Caco-2 (cell line): ENCODE measurements at regions of chr6 and their contacts with region 1.

Region 1: GRCh38 chr6:138987640-138988468 is at the start of gene REPS1:
- DNase-seq: peak; percentile 91 to 95
- H3K4me3 ChIP-seq: peak within 1 kb of the TSS; percentile 94
- H3K4me3 Mint-ChIP-seq: peak within 1 kb of the TSS; percentile 90
- H3K27ac Mint-ChIP-seq: peak within 1 kb of the TSS; percentile 91
- H3K4me1 ChIP-seq: peaks cover 30% of the 10 kb centered on the region
- H3K4me1 Mint-ChIP-seq: peaks cover 12% of the 10 kb centered on the region
- H3K27me3 ChIP-seq: no peaks in the 10 kb centered on the region
- H3K27me3 Mint-ChIP-seq: no peaks in the 10 kb centered on the region
- CTCF ChIP-seq: peak; percentile 89 to 93
- total RNA-seq, gene REPS1: 74.1 and 79.9 TPM in 2 replicates

Region 2: DNA sequence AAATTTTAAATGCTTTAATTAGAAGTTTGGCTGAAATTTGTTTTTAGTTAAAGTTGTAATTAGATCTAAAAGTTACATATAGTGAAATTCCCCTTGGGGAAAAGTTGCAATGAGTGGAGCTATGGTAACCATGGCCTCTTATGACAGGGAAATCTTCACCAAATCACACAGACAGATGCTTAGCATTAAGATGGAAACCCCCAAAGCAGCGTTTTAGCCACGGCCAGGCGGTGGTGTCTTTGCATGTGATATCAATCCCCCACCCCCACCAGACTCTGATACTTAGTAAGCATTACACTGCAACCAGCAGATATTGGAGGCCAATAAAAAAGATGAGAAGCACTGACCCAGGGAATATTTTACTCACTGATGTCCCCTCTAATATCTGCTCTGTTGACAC is 75.5 kb before region 1 on chr6:
- CTCF ChIA-PET with region 1: no interaction called
- POLR2A ChIA-PET with region 1: no interaction called
- intact Hi-C with region 1: loop called (anchors 2 kb)
- DNase-seq: no peak
- H3K4me3 ChIP-seq: no peak overlapping the region
- H3K4me3 Mint-ChIP-seq: no peak overlapping the region
- H3K27ac Mint-ChIP-seq: no peak overlapping the region
- H3K4me1 ChIP-seq: peaks cover 4% of the 10 kb centered on the region; the same call in 1 of the 2 replicates
- H3K4me1 Mint-ChIP-seq: no peaks in the 10 kb centered on the region
- H3K27me3 ChIP-seq: no peaks in the 10 kb centered on the region
- H3K27me3 Mint-ChIP-seq: no peaks in the 10 kb centered on the region
- CTCF ChIP-seq: no peak

Region 3: DNA sequence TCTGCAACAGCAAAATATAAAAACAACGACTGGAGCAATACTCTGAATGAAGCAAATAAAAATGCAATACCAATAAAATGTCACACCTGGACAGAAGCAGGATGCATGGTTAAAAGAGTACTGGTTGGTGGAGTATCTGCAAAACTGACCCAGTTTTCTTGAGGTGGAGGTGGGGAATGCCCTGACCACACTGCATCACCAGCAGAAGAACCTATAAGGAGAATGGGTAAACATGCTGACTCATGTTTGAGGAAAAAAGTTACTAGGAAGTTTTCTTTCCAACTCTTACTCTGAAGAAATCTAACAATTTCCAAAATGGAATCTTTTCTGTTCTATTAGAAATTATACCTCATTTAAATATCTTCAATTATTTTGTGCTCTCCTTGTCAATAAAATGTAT is 43.4 kb before region 1 on chr6:
- CTCF ChIA-PET with region 1: interaction called, 3 read pairs
- POLR2A ChIA-PET with region 1: no interaction called
- intact Hi-C with region 1: loop called (anchors 2 kb)
- DNase-seq: no peak
- H3K4me3 ChIP-seq: no peak overlapping the region
- H3K4me3 Mint-ChIP-seq: no peak overlapping the region
- H3K27ac Mint-ChIP-seq: no peak overlapping the region
- H3K4me1 ChIP-seq: peaks cover 14% of the 10 kb centered on the region
- H3K4me1 Mint-ChIP-seq: peaks cover 22% of the 10 kb centered on the region
- H3K27me3 ChIP-seq: no peaks in the 10 kb centered on the region
- H3K27me3 Mint-ChIP-seq: no peaks in the 10 kb centered on the region
- CTCF ChIP-seq: no peak

Region 4: DNA sequence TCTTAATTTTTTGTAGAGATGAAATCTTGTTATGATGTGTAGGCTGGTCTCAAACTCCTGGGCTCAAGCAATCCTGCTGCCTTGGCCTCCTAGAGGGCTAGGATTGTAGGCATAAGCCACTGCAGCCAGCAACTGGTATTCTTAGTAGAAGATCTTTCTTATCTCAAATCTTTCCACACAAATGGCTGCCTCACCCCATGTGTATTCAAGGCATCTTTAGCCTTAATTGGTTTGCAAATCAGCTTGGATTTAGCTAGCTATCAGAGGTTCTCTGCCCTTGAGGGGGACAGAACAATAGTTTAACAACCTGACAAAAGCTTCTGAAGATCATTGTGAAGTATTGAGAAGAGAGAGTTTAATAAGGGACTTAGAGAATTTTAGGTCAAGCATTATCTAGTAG is 22.8 kb after region 1 on chr6:
- CTCF ChIA-PET with region 1: interaction called, 4 read pairs
- POLR2A ChIA-PET with region 1: interaction called, 4 read pairs
- intact Hi-C with region 1: loop called (anchors 2 kb)
- DNase-seq: no peak
- H3K4me3 ChIP-seq: no peak overlapping the region
- H3K4me3 Mint-ChIP-seq: no peak overlapping the region
- H3K27ac Mint-ChIP-seq: no peak overlapping the region
- H3K4me1 ChIP-seq: 0 out of 2 replicates have a peak, but pooled peaks cover 10% of the 10 kb centered on the region
- H3K4me1 Mint-ChIP-seq: peaks cover 21% of the 10 kb centered on the region
- H3K27me3 ChIP-seq: no peaks in the 10 kb centered on the region
- H3K27me3 Mint-ChIP-seq: no peaks in the 10 kb centered on the region
- CTCF ChIP-seq: no peak

Region 5: DNA sequence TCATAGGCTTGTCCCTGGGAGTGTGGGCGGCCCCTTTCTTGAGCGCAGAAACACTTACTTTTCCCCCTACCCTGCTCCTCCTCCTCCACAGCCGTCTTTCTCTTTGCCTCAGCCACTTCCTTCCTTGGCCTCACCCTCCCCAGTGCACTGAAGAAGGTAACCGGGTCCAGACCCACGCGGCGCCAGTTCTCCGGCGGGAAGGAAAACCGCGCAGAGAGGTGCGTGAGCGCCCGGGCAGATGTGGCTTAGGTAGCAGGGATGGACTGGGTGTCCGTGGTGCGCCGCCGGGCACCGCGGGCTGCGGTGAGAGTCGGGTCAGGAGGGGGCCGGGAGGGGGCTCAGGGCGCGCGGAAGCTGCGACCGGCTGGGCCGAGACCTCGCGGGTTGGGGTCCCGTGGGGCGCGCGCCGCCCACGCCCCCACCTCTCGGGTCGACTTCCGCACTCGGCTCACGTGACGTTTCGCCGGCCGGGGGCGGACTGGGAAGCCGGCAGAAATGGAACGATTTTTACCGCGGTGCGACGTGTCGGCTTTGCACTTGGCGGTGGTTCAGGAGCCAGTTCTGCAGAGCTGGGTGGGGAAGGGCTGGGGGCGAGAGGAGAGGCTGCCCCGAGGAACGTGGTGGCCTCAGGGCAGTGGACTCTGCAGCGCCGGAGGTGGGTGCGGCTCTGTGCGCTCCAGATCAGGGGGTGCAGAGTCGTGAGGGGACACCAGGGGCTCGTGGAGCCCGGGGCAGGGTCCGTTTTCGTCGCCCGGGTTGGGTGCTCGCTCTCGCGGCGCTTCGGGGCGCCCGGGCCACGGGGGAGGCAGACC is 41.0 kb after region 1 on chr6 and contains the start of gene ABRACL:
- CTCF ChIA-PET with region 1: interaction called, 5 read pairs
- POLR2A ChIA-PET with region 1: interaction called, 4 read pairs
- intact Hi-C with region 1: loop called (anchors 1 kb)
- DNase-seq: peak; percentile 82 to 83
- H3K4me3 ChIP-seq: peak within 1 kb of the TSS; percentile 78
- H3K4me3 Mint-ChIP-seq: no peak within 1 kb of the TSS
- H3K27ac Mint-ChIP-seq: peak within 1 kb of the TSS; percentile 84
- H3K4me1 ChIP-seq: peaks cover 2% of the 10 kb centered on the region
- H3K4me1 Mint-ChIP-seq: peaks cover 8% of the 10 kb centered on the region
- H3K27me3 ChIP-seq: no peaks in the 10 kb centered on the region
- H3K27me3 Mint-ChIP-seq: no peaks in the 10 kb centered on the region
- CTCF ChIP-seq: no peak
- total RNA-seq, gene ABRACL: 90.3 and 90.8 TPM in 2 replicates

Region 6: DNA sequence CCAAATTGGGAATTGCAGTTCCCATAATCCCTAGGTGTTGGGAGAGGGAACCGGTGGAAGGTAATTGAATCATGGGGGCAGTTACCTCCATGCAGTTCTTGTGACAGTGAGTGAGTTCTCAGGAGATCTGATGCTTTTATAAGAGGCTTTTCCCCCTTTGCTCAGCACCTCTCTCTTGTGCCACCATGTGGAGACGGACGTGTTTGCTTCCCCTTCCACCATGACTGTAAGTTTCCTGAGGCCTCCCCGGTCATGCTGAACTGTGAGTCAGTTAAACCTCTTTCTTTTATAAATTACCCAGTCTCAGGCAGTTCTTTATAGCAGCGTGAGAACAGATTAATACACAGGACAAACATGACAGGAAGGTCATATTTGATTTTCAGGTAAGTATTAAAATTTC is 121.7 kb after region 1 on chr6:
- CTCF ChIA-PET with region 1: no interaction called
- POLR2A ChIA-PET with region 1: no interaction called
- intact Hi-C with region 1: loop called (anchors 2 kb)
- DNase-seq: peak; percentile 58 to 59
- H3K4me3 ChIP-seq: no peak overlapping the region
- H3K4me3 Mint-ChIP-seq: no peak overlapping the region
- H3K27ac Mint-ChIP-seq: peak overlapping the region; percentile 33
- H3K4me1 ChIP-seq: no peaks in the 10 kb centered on the region
- H3K4me1 Mint-ChIP-seq: no peaks in the 10 kb centered on the region
- H3K27me3 ChIP-seq: no peaks in the 10 kb centered on the region
- H3K27me3 Mint-ChIP-seq: no peaks in the 10 kb centered on the region
- CTCF ChIP-seq: peak; percentile 46 to 62